CD4-positive, alpha-beta T cell (primary cell): ENCODE measurements at regions of chr4 and their contacts with region 1.

Region 1: DNA sequence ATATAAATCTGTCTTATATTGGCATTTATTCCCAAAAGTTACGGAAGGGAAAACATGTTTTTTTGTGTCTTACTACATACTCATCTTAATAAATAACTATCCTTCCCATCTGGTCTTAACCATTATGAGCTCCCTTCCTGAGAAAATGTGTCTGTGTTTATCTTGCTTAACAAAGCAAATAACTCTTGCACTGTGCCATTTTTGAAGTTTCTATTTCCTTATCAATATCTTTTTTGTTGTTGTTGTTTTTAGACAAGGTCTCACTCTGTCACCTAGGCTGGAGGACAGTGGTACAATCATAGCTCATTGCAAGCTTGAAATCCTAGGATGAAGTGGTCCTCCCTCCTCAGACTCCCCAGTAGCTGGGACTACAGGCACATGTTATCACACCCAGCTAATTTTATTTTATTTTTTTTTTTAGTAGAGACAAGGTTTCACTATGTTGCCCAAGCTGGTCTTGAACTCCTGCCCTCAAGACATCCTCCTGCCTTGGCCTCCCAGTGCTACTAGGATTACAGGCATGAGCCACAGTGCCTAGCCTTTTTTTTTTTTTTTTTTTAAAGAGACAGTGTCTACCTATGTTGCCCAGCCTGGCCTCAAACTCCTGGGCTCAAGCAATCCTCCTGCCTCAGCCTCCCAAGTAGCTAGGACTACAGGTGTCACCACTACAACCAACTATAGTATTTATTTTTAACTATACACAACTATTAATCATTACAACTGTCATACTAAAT is 36.9 kb downstream of the CNOT6L start:
- DNase-seq: no peak
- ATAC-seq: no peak
- H3K4me3 ChIP-seq: no peak overlapping the region
- H3K4me3 Mint-ChIP-seq: peak overlapping the region; percentile 28
- H3K27ac ChIP-seq: no peak overlapping the region
- H3K27ac Mint-ChIP-seq: peak overlapping the region; percentile 8
- H3K4me1 ChIP-seq: peaks cover 35% of the 10 kb centered on the region
- H3K4me1 Mint-ChIP-seq: peaks cover 81% of the 10 kb centered on the region
- H3K27me3 ChIP-seq: no peaks in the 10 kb centered on the region
- H3K27me3 Mint-ChIP-seq: no peaks in the 10 kb centered on the region
- CTCF ChIP-seq: no peak

Region 2: GRCh38 chr4:77418333-77419038 is 363.8 kb before region 1 on chr4:
- CTCF ChIA-PET with region 1: no interaction called
- POLR2A ChIA-PET with region 1: no interaction called
- intact Hi-C with region 1: no loop called
- DNase-seq: no peak
- ATAC-seq: no peak
- H3K4me3 ChIP-seq: no peak overlapping the region
- H3K4me3 Mint-ChIP-seq: no peak overlapping the region
- H3K27ac ChIP-seq: no peak overlapping the region
- H3K27ac Mint-ChIP-seq: no peak overlapping the region
- H3K4me1 ChIP-seq: no peaks in the 10 kb centered on the region
- H3K4me1 Mint-ChIP-seq: no peaks in the 10 kb centered on the region
- H3K27me3 ChIP-seq: peaks cover 3 to 5% of the 10 kb centered on the region in 2 experiments
- H3K27me3 Mint-ChIP-seq: no peaks in the 10 kb centered on the region
- CTCF ChIP-seq: no peak

Region 3: DNA sequence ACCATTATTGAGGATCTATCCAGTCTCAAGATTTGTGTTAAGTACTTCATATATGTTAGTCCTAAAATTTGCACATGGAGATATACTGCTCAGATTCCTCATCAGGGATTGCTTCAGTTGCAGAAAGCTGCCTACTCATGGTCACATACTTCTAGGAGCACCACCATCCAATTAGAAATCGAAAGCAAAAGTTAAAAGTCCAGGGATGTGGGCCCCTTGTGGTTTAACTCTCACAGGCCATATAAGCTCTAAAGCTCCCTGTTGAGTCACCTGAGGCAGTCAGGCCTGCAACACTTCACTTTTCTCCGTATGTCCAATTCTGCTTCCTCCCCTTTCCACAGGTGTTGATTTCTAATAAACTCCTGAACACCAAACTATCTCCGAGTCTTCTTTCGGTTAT is 47.3 kb before region 1 on chr4:
- CTCF ChIA-PET with region 1: interaction called, 3 read pairs
- POLR2A ChIA-PET with region 1: no interaction called
- intact Hi-C with region 1: loop called in 1 of 2 experiments (anchors 5 kb)
- DNase-seq: peak in 5 of 14 experiments; percentile 4 to 81 (median 62)
- ATAC-seq: peak; percentile 71
- H3K4me3 ChIP-seq: no peak overlapping the region
- H3K4me3 Mint-ChIP-seq: peak overlapping the region; percentile 61
- H3K27ac ChIP-seq: no peak overlapping the region
- H3K27ac Mint-ChIP-seq: peak overlapping the region; percentile 78
- H3K4me1 ChIP-seq: peaks cover 5% of the 10 kb centered on the region
- H3K4me1 Mint-ChIP-seq: peaks cover 82% of the 10 kb centered on the region
- H3K27me3 ChIP-seq: no peaks in the 10 kb centered on the region
- H3K27me3 Mint-ChIP-seq: no peaks in the 10 kb centered on the region
- CTCF ChIP-seq: no peak

Region 4: DNA sequence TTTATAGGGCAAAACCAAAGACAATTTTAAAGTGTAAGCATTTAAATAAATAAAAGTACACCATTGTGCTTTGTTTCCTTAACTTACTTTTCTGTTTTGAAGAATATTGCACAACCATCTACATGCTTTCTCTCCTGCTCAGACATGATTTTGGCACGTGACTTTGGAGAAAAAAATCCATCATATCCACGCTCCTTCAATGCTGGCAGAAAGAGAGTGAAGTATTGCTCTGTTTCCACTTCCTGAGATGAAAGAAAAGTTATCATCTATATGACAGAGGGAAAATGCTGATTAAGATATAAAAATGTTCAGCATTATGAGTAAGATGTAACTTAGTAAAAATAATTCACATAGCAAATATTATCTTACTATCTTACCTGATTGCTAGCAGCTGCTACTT is 40.2 kb before region 1 on chr4:
- CTCF ChIA-PET with region 1: no interaction called
- POLR2A ChIA-PET with region 1: no interaction called
- intact Hi-C with region 1: loop called in 1 of 2 experiments (anchors 5 kb)
- DNase-seq: no peak
- ATAC-seq: no peak
- H3K4me3 ChIP-seq: no peak overlapping the region
- H3K4me3 Mint-ChIP-seq: no peak overlapping the region
- H3K27ac ChIP-seq: no peak overlapping the region
- H3K27ac Mint-ChIP-seq: peak overlapping the region; percentile 63
- H3K4me1 ChIP-seq: peaks cover 5% of the 10 kb centered on the region
- H3K4me1 Mint-ChIP-seq: peaks cover 70% of the 10 kb centered on the region
- H3K27me3 ChIP-seq: no peaks in the 10 kb centered on the region
- H3K27me3 Mint-ChIP-seq: no peaks in the 10 kb centered on the region
- CTCF ChIP-seq: no peak

Region 5: DNA sequence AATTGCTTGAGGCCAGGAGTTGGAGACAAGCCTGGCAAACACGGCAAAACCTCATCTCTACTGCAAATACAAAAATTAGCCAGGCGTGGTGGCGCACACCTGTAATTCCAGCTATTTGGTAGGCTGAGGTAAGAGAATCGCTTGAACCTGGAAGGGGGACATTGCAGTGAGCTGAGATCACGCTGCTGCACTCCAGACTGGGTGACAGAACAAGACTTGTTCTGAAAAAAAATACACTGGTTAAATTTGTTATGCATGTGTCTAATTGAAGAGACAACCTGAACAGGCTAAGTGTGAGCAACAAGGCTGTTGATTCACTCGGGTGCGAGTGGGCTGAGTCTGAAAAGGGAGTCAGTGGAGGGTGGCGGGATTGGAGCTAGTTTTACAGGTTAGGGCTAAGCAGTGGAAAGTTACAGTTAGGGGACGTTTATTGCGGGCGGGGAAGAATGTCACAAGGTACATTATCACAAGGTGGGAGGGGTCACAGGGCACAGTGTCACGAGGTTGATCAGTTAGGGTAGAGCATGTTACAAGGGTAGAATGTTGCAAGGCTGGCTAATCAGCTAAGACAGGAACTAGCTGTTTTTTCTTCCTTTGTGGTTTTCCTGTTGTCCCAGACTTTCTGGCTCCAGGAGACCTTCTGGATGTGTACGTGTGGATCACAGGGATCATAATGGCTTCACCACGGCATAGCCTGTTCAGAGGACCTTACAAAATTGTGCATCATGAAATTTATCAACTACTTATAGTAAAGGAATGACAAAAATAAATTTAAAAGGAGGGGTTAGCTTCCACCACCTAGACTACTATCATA is 1427.8 kb after region 1 on chr4:
- CTCF ChIA-PET with region 1: no interaction called
- POLR2A ChIA-PET with region 1: no interaction called
- intact Hi-C with region 1: no loop called
- DNase-seq: no peak
- ATAC-seq: no peak
- H3K4me3 ChIP-seq: no peak overlapping the region
- H3K4me3 Mint-ChIP-seq: no peak overlapping the region
- H3K27ac ChIP-seq: no peak overlapping the region
- H3K27ac Mint-ChIP-seq: no peak overlapping the region
- H3K4me1 ChIP-seq: no peaks in the 10 kb centered on the region
- H3K4me1 Mint-ChIP-seq: no peaks in the 10 kb centered on the region
- H3K27me3 ChIP-seq: no peaks in the 10 kb centered on the region
- H3K27me3 Mint-ChIP-seq: no peaks in the 10 kb centered on the region
- CTCF ChIP-seq: no peak